Endothelial cell of umbilical vein (primary cell): ENCODE measurements at regions of chr2 and their contacts with region 1.

Region 1: GRCh38 chr2:61689568-61689967 is 151.4 kb upstream of the XPO1 start:
- DNase-seq: no peak
- H3K4me3 ChIP-seq: no peak overlapping the region
- H3K27ac ChIP-seq: no peak overlapping the region
- H3K4me1 ChIP-seq: no peaks in the 10 kb centered on the region
- H3K27me3 ChIP-seq: no peaks in the 10 kb centered on the region
- CTCF ChIP-seq: no peak
- POLR2A ChIP-seq: no peak

Region 2: DNA sequence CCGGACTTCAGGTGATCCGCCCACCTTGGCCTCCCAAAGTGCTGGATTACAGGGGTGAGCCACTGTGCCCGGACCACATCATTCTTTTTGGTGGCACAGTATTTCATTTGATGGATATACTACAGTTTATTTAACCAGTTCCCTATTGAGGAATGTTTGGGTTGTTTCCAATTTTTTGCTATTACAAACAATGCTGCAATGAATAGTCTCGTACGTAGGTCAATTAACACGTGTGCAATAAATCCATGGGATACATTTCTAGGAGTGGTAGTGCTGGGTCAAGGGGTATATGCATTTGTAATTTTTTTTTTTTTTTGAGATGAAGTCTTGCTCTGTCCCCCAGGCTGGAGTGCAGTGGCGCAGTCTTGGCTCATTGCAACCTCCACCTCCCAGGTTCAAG is 123.0 kb before region 1 on chr2:
- CTCF ChIA-PET with region 1: no interaction called
- POLR2A ChIA-PET with region 1: no interaction called
- dilution Hi-C with region 1: no loop called
- intact Hi-C with region 1: no loop called
- DNase-seq: peak; percentile 15
- H3K4me3 ChIP-seq: no peak overlapping the region
- H3K27ac ChIP-seq: no peak overlapping the region
- H3K4me1 ChIP-seq: no peaks in the 10 kb centered on the region
- H3K27me3 ChIP-seq: no peaks in the 10 kb centered on the region
- CTCF ChIP-seq: no peak
- POLR2A ChIP-seq: no peak

Region 3: DNA sequence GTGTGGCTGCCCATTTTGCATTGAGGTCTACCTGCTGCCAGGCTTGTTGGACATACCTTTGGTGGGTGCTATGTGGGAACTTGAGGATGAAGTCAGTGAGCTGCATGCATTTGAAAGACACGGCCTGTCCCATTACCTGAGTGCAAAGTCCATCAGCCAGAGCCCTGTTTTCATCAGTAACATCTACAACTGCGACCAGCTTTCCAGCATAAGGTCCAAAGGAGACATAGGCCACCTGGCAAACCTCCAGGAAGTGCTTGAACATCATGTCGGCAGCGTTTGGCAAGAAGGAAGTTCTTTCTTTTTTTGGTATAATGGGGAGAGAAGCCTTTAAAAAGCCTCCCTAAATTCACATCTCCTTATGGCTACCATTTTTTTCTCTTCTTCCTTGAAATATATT is 21.1 kb after region 1 on chr2:
- CTCF ChIA-PET with region 1: no interaction called
- POLR2A ChIA-PET with region 1: no interaction called
- dilution Hi-C with region 1: no loop called
- intact Hi-C with region 1: no loop called
- DNase-seq: no peak
- H3K4me3 ChIP-seq: no peak overlapping the region
- H3K27ac ChIP-seq: no peak overlapping the region
- H3K4me1 ChIP-seq: no peaks in the 10 kb centered on the region
- H3K27me3 ChIP-seq: peaks cover 0 to 4% of the 10 kb centered on the region in 2 experiments
- CTCF ChIP-seq: no peak
- POLR2A ChIP-seq: no peak

Region 4: GRCh38 chr2:63614983-63615945 is 1925.7 kb after region 1 on chr2:
- CTCF ChIA-PET with region 1: no interaction called
- POLR2A ChIA-PET with region 1: no interaction called
- dilution Hi-C with region 1: no loop called
- intact Hi-C with region 1: loop called (anchors 5 kb)
- DNase-seq: peak; percentile 2
- H3K4me3 ChIP-seq: no peak overlapping the region
- H3K27ac ChIP-seq: no peak overlapping the region
- H3K4me1 ChIP-seq: no peaks in the 10 kb centered on the region
- H3K27me3 ChIP-seq: peaks cover 2 to 6% of the 10 kb centered on the region in 2 experiments
- CTCF ChIP-seq: no peak
- POLR2A ChIP-seq: no peak